Stomach (tissue), 19 donors: ENCODE measurements at regions of chr2 and their contacts with region 1.

Region 1: GRCh38 chr2:206693399-206694137 is 24.6 kb downstream of the DYTN start:
- DNase-seq: peak in 1 of 2 donors; percentile 81
- H3K4me3 ChIP-seq: no peak overlapping the region
- H3K27ac ChIP-seq: no peak overlapping the region
- H3K4me1 ChIP-seq: no peaks in the 10 kb centered on the region
- H3K27me3 ChIP-seq: no peaks in the 10 kb centered on the region
- CTCF ChIP-seq: peak in 5 of 7 experiments; percentile 12 to 65 (median 54)
- EP300 ChIP-seq: no peak
- POLR2A ChIP-seq: no peak

Region 2: GRCh38 chr2:208072250-208072892 is 1378.8 kb after region 1 on chr2:
- intact Hi-C with region 1: loop called (anchors 10 kb)
- DNase-seq: peak; percentile 64 to 90
- H3K4me3 ChIP-seq: no peak overlapping the region
- H3K27ac ChIP-seq: no peak overlapping the region
- H3K4me1 ChIP-seq: no peaks in the 10 kb centered on the region
- H3K27me3 ChIP-seq: peaks cover 0 to 9% (median 0%) of the 10 kb centered on the region in 3 donors
- CTCF ChIP-seq: peak in 5 of 7 experiments; percentile 46 to 75 (median 69)
- EP300 ChIP-seq: no peak
- POLR2A ChIP-seq: no peak